ENCODE measurements at regions of chr7 and their contacts with region 1.

Region 1: GRCh38 chr7:64758164-64758563 is 36.1 kb upstream of the ZNF138 start:
- DNase-seq: no peak
- ATAC-seq: no peak
- H3K4me3 ChIP-seq: no peak overlapping the region
- H3K27ac ChIP-seq: no peak overlapping the region
- H3K4me1 ChIP-seq: no peaks in the 10 kb centered on the region
- H3K27me3 ChIP-seq: no peaks in the 10 kb centered on the region
- CTCF ChIP-seq: no peak
- EP300 ChIP-seq: no peak
- POLR2A ChIP-seq: no peak
- RAD21 ChIP-seq: no peak

Region 2: DNA sequence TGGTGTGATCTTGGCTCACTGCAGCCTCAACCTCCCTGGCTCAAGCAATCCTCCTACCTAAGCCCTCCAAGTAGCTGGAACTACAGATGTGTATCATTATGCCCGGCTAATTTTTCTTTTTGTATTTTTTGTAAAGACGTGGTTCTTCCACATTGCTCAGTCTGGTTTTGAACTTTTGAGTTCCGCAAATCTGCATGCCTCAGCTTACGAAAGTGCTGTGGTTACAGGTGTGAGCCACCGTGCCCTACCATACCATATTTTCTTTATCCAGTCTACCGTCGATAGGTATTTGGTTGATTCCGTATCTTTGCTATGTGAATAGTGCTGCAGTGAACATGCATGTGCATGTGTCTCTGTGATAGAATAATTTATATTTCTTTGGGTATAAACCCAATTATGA is 85.8 kb before region 1 on chr7:
- CTCF ChIA-PET with region 1: no interaction called
- POLR2A ChIA-PET with region 1: no interaction called
- in situ Hi-C with region 1: no loop called
- intact Hi-C with region 1: loop called (anchors 10 kb)
- DNase-seq: no peak
- ATAC-seq: no peak
- H3K4me3 ChIP-seq: no peak overlapping the region
- H3K27ac ChIP-seq: no peak overlapping the region
- H3K4me1 ChIP-seq: peaks cover 0 to 5% of the 10 kb centered on the region in 2 experiments; a peak in 3 of 5 replicates
- H3K27me3 ChIP-seq: no peaks in the 10 kb centered on the region
- CTCF ChIP-seq: no peak
- EP300 ChIP-seq: no peak
- POLR2A ChIP-seq: no peak
- RAD21 ChIP-seq: no peak